Vagina (tissue), 2 donors: ENCODE measurements at regions of chr1 and their contacts with region 1.

Region 1: GRCh38 chr1:184222652-184223052 is 164.2 kb upstream of the C1orf21 start:
- DNase-seq: no peak
- H3K4me3 ChIP-seq: peak overlapping the region in 1 of 2 donors; percentile 11
- H3K27ac ChIP-seq: peak overlapping the region; percentile 9
- H3K4me1 ChIP-seq: no peaks in the 10 kb centered on the region
- H3K27me3 ChIP-seq: no peaks in the 10 kb centered on the region
- CTCF ChIP-seq: peak; percentile 82 to 93 (median 85)
- POLR2A ChIP-seq: no peak

Region 2: DNA sequence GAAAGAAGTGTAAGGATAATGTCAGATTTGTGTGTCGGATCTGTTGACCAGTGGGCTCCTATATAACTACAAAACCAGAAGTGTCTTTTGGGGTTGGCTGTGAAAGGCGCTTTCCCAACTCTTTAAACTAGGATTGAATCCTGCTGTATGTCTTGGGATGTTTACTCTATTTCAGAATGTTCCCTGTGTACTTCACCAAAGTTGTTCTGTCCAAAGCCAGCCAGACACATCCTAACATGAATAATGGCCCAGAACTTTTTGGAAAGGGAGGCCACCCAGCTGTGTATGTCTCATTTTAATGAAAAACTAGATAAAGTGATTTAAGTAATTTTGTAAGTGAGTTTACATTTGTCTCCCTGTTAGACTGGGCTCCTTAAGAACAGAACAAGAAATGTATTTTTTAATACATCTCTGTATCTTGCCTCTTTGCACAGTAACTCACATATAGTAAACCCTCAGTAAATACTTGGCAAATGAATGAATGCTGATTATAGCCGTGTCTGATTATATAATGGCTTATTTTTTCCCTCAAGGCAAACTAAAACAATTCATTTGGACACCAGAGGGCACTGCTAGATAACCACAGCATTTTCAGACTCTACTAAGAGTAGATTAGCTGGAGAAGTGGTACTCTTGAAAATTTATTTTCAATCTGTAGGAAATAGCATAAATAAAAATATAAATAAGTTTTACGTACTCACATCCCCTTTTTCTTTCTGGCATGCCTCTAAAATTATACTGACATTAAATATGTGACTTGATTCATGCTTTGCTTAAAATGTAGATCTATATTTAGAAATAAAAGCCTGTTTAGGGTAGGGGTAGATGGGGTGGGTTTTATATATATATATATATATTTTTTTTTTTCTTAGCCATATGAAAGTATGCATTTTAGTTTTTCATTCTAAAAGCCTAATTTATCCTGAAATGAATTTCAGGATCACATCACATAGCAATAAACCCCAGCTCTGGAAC is 147.3 kb before region 1 on chr1:
- intact Hi-C with region 1: loop called (anchors 5 kb)
- DNase-seq: no peak
- H3K4me3 ChIP-seq: no peak overlapping the region
- H3K27ac ChIP-seq: peak overlapping the region; percentile 59
- H3K4me1 ChIP-seq: peaks cover 5% of the 10 kb centered on the region
- H3K27me3 ChIP-seq: no peaks in the 10 kb centered on the region
- CTCF ChIP-seq: peak; percentile 68 to 83 (median 79)
- POLR2A ChIP-seq: no peak

Region 3: DNA sequence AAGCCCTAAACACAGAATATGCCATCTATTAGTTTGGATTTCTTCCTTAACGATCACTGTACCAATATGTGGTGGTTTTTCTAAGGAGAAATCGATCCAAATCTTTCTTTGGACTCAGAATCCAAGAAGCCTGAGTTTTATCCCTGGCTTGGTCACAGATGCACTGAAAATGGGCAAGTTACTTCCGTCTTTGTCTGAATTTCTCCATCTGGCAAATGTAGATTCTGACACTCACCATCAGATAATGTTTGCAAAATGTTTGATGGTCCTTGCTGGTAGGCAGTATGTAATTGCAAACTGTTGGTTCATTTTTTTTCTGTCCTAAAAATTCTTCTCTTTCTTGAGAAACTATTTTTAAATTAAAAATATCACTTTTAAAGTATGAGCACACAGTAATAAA is 56.2 kb before region 1 on chr1:
- intact Hi-C with region 1: no loop called
- DNase-seq: no peak
- H3K4me3 ChIP-seq: no peak overlapping the region
- H3K27ac ChIP-seq: no peak overlapping the region
- H3K4me1 ChIP-seq: peaks cover 8% of the 10 kb centered on the region
- H3K27me3 ChIP-seq: no peaks in the 10 kb centered on the region
- CTCF ChIP-seq: no peak
- POLR2A ChIP-seq: no peak

Region 4: GRCh38 chr1:184191181-184191621 is 31.5 kb before region 1 on chr1:
- intact Hi-C with region 1: no loop called
- DNase-seq: no peak
- H3K4me3 ChIP-seq: no peak overlapping the region
- H3K27ac ChIP-seq: no peak overlapping the region
- H3K4me1 ChIP-seq: no peaks in the 10 kb centered on the region
- H3K27me3 ChIP-seq: no peaks in the 10 kb centered on the region
- CTCF ChIP-seq: no peak
- POLR2A ChIP-seq: no peak